Activated CD4-positive, alpha-beta T cell treated with anti-CD3 and anti-CD28 coated beads for 36 hours (primary cell): ENCODE measurements at regions of chr2 and their contacts with region 1.

Region 1: DNA sequence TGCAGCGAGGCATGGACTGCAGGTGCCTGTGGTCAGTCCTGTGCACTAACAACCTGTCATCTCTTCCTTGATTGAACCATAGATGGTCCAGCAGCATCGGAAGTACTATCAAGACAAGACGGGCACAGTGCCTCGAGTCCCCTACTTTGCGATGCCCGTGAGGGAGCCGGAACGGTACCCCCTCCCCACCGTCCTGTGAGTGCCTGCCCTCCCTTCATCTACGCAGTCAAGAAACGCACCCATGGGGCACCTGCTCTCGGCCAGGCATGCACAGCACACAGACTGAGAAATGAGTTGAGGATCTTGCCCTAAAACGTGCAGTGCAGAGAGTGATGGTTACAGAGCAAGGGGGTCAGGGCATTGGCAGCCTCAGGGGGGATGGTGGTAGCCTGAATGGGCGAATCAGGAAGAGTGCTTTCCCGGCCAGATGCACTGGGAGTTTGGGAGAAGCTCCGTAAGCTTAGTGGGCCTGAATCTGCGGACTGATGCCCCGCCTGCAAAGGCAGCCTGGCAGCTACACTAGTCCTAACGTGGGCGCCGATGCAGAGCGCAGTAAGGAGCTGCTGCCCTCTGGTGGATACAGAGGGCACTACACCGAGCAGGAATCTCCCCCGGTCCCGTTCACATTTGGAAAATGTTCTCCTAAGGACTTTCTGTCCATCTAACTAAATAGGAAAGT is 63.6 kb downstream of the CIB4 start:
- DNase-seq: peak; percentile 82
- ATAC-seq: peak; percentile 92
- H3K4me3 Mint-ChIP-seq: no peak overlapping the region
- H3K27ac Mint-ChIP-seq: no peak overlapping the region
- H3K4me1 Mint-ChIP-seq: no peaks in the 10 kb centered on the region
- H3K27me3 Mint-ChIP-seq: peaks cover 2% of the 10 kb centered on the region

Region 2: GRCh38 chr2:26503231-26503880 is 74.2 kb before region 1 on chr2:
- CTCF ChIA-PET with region 1: interaction called, 31 read pairs
- POLR2A ChIA-PET with region 1: no interaction called
- intact Hi-C with region 1: loop called (anchors 1 kb)
- DNase-seq: peak; percentile 94
- ATAC-seq: peak; percentile 100
- H3K4me3 Mint-ChIP-seq: peak overlapping the region; percentile 65
- H3K27ac Mint-ChIP-seq: peak overlapping the region; percentile 63
- H3K4me1 Mint-ChIP-seq: peaks cover 3% of the 10 kb centered on the region
- H3K27me3 Mint-ChIP-seq: peaks cover 1% of the 10 kb centered on the region

Region 3: GRCh38 chr2:26591619-26592505 is 14.3 kb after region 1 on chr2:
- CTCF ChIA-PET with region 1: interaction called, 20 read pairs
- POLR2A ChIA-PET with region 1: no interaction called
- intact Hi-C with region 1: no loop called
- DNase-seq: no peak
- ATAC-seq: peak; percentile 70
- H3K4me3 Mint-ChIP-seq: no peak overlapping the region
- H3K27ac Mint-ChIP-seq: no peak overlapping the region
- H3K4me1 Mint-ChIP-seq: peaks cover 5% of the 10 kb centered on the region
- H3K27me3 Mint-ChIP-seq: peaks cover 16% of the 10 kb centered on the region